ENCODE measurements at regions of chr5 and their contacts with region 1.

Region 1: GRCh38 chr5:173144200-173145176 is at the start of gene BNIP1:
- DNase-seq: peak; percentile 89 to 94 (median 94)
- H3K4me3 ChIP-seq: peak within 1 kb of the TSS; percentile 58 to 92 (median 89)
- H3K4me3 Mint-ChIP-seq: peak within 1 kb of the TSS; percentile 98 to 99
- H3K27ac ChIP-seq: peak within 1 kb of the TSS; percentile 88 to 93
- H3K27ac Mint-ChIP-seq: peak within 1 kb of the TSS; percentile 92 to 99 (median 96)
- H3K4me1 ChIP-seq: peaks cover 5 to 11% of the 10 kb centered on the region in 2 donors
- H3K4me1 Mint-ChIP-seq: peaks cover 4% of the 10 kb centered on the region
- H3K27me3 ChIP-seq: no peaks in the 10 kb centered on the region
- H3K27me3 Mint-ChIP-seq: peaks cover 0 to 4% (median 0%) of the 10 kb centered on the region in 3 donors
- CTCF ChIP-seq: peak; percentile 89
- polyA plus RNA-seq, gene BNIP1: 9.2 to 13.6 (median 9.8) TPM

Region 2: GRCh38 chr5:172984243-172984953 is 160.1 kb before region 1 on chr5:
- intact Hi-C with region 1: loop called (anchors 10 kb)
- DNase-seq: peak; percentile 78 to 83 (median 82)
- H3K4me3 ChIP-seq: peak overlapping the region; percentile 67 to 97 (median 95)
- H3K4me3 Mint-ChIP-seq: peak overlapping the region; percentile 94 to 99
- H3K27ac ChIP-seq: peak overlapping the region; percentile 97 to 98
- H3K27ac Mint-ChIP-seq: peak overlapping the region; percentile 97 to 99 (median 99)
- H3K4me1 ChIP-seq: peaks cover 31 to 37% of the 10 kb centered on the region in 2 donors
- H3K4me1 Mint-ChIP-seq: peaks cover 39% of the 10 kb centered on the region
- H3K27me3 ChIP-seq: no peaks in the 10 kb centered on the region
- H3K27me3 Mint-ChIP-seq: no peaks in the 10 kb centered on the region
- CTCF ChIP-seq: peak; percentile 66

Region 3: DNA sequence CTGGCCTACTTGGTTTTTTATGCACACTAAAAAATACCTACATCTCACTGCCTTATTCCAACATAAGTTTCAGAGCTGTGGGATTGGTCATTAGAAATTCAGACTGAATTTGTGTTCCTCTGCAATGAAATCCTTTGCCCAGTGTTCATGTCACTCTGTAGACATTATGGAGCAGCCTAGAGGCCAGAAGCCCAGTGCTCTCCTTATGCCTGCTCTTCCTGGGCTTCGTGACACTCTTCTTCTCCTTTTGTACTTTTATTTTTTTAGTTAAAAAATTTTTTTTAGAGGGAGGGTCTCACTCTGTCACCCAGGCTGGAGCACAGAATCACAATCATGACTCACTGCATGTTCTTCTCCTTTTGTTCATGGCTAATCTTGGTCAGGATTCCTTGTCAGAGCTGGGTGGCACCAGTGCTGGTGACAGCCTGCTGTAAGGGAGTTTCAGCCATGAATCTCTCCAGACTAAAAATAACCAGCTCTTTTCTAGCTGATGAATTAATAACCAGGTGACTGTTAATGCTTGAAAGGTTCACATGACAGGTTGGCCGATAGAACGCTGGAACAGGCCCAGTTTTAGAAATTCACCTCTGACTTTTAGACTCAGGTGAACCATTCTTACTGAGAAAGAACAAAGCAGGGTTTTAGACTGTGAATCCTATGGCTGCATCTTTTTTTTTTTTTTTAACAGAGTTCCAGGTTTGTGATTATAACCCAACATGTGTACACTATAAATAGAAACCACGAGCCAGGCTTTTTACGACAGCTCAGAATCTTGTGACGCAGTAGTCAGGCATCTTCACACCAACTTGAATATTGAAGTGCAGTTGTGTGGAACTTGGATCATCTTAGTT is 810.4 kb after region 1 on chr5:
- intact Hi-C with region 1: no loop called
- DNase-seq: peak in 1 of 3 donors; percentile 27
- H3K4me3 ChIP-seq: no peak overlapping the region
- H3K4me3 Mint-ChIP-seq: no peak overlapping the region
- H3K27ac ChIP-seq: peak overlapping the region in 1 of 2 donors; percentile 32
- H3K27ac Mint-ChIP-seq: peak overlapping the region in 5 of 7 donors; percentile 41 to 87 (median 72)
- H3K4me1 ChIP-seq: no peaks in the 10 kb centered on the region
- H3K4me1 Mint-ChIP-seq: peaks cover 1% of the 10 kb centered on the region
- H3K27me3 ChIP-seq: no peaks in the 10 kb centered on the region
- H3K27me3 Mint-ChIP-seq: no peaks in the 10 kb centered on the region
- CTCF ChIP-seq: no peak

Measured in CD14-positive monocyte (primary cell).